Breast epithelium (tissue), 4 donors: ENCODE measurements at regions of chr2 and their contacts with region 1.

Region 1: GRCh38 chr2:154049561-154049960 is 177.8 kb downstream of the GALNT13 start:
- DNase-seq: no peak
- H3K4me3 ChIP-seq: no peak overlapping the region
- H3K27ac ChIP-seq: no peak overlapping the region
- H3K4me1 ChIP-seq: no peaks in the 10 kb centered on the region
- H3K27me3 ChIP-seq: no peaks in the 10 kb centered on the region
- CTCF ChIP-seq: no peak
- POLR2A ChIP-seq: no peak

Region 2: DNA sequence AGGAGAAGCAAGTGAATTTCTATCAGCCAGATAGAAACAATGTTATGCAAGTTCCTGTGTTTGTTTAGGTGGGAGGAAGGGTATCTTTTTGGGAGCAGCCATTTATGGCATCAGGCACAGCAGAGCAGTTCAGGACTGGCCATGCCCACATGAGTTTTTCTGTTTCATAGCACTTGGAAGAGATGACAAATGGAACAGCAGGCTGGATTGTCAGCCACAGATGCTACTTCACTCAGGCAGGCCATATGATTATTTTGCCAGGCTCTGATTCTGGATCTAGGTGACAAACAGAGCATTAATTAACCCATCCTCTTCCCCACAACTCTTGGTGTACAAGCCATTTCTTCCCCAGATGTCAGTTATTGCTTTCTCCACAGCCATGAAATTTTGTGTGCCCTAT is 114.0 kb before region 1 on chr2:
- intact Hi-C with region 1: no loop called
- DNase-seq: no peak
- H3K4me3 ChIP-seq: no peak overlapping the region
- H3K27ac ChIP-seq: no peak overlapping the region
- H3K4me1 ChIP-seq: no peaks in the 10 kb centered on the region
- H3K27me3 ChIP-seq: no peaks in the 10 kb centered on the region
- CTCF ChIP-seq: no peak
- POLR2A ChIP-seq: no peak

Region 3: GRCh38 chr2:153990771-153991170 is 58.8 kb before region 1 on chr2:
- intact Hi-C with region 1: loop called (anchors 2 kb)
- DNase-seq: no peak
- H3K4me3 ChIP-seq: no peak overlapping the region
- H3K27ac ChIP-seq: no peak overlapping the region
- H3K4me1 ChIP-seq: no peaks in the 10 kb centered on the region
- H3K27me3 ChIP-seq: no peaks in the 10 kb centered on the region
- CTCF ChIP-seq: no peak
- POLR2A ChIP-seq: no peak

Region 4: GRCh38 chr2:155431004-155431507 is 1381.5 kb after region 1 on chr2:
- intact Hi-C with region 1: no loop called
- DNase-seq: no peak
- H3K4me3 ChIP-seq: no peak overlapping the region
- H3K27ac ChIP-seq: no peak overlapping the region
- H3K4me1 ChIP-seq: no peaks in the 10 kb centered on the region
- H3K27me3 ChIP-seq: no peaks in the 10 kb centered on the region
- CTCF ChIP-seq: no peak
- POLR2A ChIP-seq: no peak